ENCODE measurements at regions of chr14 and their contacts with region 1.

Region 1: DNA sequence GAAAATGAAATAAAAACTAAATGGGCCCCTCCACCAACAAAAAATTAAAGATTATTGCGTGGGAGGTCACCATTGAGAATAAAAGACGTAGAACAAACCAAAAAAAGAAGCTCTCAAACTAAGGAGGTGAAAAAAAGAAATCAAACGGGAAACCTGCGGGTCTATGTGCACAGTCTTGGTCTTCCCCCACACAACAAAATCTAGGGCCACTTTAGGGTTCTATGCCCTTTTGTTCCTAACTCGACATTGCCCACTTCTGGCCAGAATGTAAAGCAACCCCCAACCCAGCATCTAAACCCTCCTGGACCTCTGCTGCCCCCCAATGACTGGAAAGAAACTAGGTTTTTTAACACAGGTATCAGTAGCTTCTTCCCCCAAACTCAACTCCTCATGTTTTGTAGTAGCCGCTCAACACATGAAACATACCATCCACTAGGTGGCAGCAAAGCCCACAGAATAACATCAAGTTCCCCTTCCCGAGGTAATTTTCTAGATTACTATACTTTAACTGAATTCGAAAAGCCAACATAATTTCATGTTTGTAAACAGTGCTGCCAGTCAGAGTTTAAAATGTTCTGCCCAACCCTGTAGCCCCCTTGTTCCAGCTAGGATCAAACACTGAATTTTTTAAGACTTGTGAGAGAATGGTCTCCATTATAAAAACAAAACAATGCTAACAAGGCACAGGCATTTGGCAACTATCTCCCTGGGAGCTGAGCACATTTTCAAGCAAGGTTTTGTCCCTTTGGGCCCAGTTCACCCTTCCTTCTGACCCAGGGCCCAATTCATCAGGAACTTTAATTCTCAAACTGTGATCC is 18.7 kb downstream of the DAD1 start:
- DNase-seq: peak; percentile 98
- H3K4me3 ChIP-seq: peak overlapping the region; percentile 65
- H3K27ac ChIP-seq: peak overlapping the region; percentile 83
- H3K4me1 ChIP-seq: peaks cover 56% of the 10 kb centered on the region
- CTCF ChIP-seq: peak; percentile 100

Region 2: GRCh38 chr14:22432348-22432976 is 137.9 kb before region 1 on chr14:
- CTCF ChIA-PET with region 1: interaction called, 3 read pairs
- POLR2A ChIA-PET with region 1: interaction called, 13 read pairs
- intact Hi-C with region 1: no loop called
- DNase-seq: peak; percentile 94
- H3K4me3 ChIP-seq: peak overlapping the region; percentile 61
- H3K27ac ChIP-seq: peak overlapping the region; percentile 97
- H3K4me1 ChIP-seq: peaks cover 88% of the 10 kb centered on the region
- CTCF ChIP-seq: no peak

Region 3: DNA sequence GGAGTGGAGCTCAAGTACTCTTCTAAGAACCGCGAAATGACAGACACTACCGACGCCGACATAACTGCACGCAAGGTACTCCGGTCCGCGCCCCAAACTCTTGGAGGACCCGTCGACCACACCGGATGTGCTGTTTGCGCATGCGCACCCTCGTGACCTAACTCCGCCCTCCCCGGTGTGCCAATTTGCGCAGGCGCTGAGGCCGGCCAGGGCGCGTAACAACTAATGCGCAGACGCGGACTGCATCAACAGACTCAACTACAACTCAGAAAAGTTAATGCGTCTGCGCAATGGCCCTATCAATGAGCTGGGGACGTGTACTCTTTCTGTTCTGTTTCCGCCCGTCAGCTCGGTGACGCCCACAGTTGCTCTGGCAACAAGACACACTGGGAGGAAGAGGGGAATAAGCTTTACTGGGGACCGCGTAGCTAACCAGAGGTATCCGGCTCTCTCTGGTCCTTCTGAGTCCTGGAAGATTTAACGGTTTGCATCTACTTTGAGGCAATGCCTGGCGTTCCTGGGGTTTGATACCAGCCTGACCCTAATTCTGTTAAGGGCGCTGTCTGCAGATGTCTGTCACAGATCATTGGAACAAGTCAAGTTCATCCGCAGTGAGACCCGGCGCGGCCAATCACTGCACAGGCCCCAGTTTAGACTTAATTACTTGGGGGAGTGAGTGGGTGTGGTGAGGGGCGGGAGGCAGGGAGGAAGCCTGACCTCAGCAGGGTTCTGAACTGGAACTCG is 18.9 kb after region 1 on chr14 and contains the start of gene DAD1:
- CTCF ChIA-PET with region 1: interaction called, 5 read pairs
- POLR2A ChIA-PET with region 1: interaction called, 14 read pairs
- intact Hi-C with region 1: no loop called
- DNase-seq: peak; percentile 100
- H3K4me3 ChIP-seq: peak within 1 kb of the TSS; percentile 91
- H3K27ac ChIP-seq: peak within 1 kb of the TSS; percentile 77
- H3K4me1 ChIP-seq: peaks cover 52% of the 10 kb centered on the region
- CTCF ChIP-seq: no peak; the same call in 1 of the 2 replicates
- total RNA-seq, gene DAD1: 88.6 and 154 TPM in 2 replicates

Region 4: GRCh38 chr14:22713631-22713950 is 143.2 kb after region 1 on chr14:
- CTCF ChIA-PET with region 1: no interaction called
- POLR2A ChIA-PET with region 1: interaction called, 3 read pairs
- intact Hi-C with region 1: loop called (anchors 1 kb)
- DNase-seq: no peak
- H3K4me3 ChIP-seq: peak overlapping the region; percentile 62
- H3K27ac ChIP-seq: no peak overlapping the region
- H3K4me1 ChIP-seq: peaks cover 13% of the 10 kb centered on the region
- CTCF ChIP-seq: no peak

Region 5: DNA sequence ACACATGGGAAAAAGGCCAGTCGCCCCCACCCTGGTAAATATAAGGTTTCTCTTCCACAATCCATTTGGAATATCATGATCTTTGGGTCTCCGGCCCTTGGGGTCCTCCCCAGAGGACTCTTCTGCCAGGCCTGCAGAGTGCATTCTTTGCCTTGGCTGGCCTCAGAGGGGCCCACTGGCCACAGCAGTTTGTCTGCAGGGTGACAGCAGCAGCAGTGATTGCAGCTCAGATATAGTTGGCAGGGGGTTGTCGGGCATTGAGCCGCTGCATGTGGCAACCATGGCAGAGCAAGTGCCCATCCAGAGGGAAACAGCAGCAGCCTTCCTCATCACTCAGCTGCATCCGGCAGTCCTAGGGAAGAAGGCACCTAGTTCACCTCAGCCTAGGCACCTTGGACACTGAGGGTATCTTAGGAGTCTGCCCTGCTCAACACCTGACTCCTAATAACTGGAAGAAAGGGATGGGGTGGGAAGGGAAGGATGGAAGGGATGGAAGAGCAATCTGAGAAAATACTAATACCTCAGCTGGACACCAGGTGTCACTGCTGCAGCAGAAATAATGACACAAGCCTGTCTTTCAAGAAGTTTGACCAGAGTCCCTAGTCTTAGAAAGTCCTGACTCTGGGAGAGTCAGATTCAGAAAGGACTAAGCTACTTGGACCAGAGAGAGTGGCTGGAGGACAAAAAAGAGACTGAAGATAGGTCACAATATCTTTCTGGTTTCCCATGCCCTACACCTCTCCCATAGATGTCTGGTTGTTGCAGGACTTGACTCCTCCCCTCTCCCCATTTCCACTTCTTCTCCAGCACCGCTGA is 403.1 kb after region 1 on chr14:
- CTCF ChIA-PET with region 1: no interaction called
- POLR2A ChIA-PET with region 1: no interaction called
- intact Hi-C with region 1: loop called (anchors 5 kb)
- DNase-seq: peak; percentile 65
- H3K4me3 ChIP-seq: no peak overlapping the region
- H3K27ac ChIP-seq: no peak overlapping the region
- H3K4me1 ChIP-seq: peaks cover 17% of the 10 kb centered on the region
- CTCF ChIP-seq: peak; percentile 85

Measured in OCI-LY7 (cell line).